ENCODE measurements at regions of chr3 and their contacts with region 1.

Region 1: DNA sequence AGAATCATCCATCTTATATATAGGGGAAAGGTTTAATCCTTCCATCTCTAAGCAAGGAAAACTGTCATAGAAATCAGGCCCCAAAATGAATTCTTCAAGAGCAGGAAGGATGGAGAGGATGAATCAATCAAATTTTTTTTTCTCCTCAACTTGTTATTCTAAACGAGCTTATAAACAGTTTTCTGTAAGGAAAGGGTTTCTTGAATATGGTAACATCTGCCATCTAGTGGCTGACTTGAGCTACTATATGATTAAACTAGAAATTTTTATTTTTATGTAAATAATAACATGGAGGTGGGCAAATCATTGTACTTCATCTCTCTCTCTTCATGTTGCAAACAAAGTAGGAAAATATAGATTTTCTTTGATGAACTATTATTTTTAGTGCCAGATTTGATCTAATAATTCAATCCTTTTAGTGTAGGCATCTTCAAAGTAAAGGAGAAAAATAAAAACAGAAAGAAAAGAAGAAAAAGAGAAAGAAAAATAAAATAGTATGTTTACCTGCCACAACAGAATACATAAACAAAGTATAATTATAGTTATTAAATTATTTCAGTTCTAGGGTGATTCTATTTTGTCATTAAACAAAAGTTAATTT is 146.6 kb downstream of the SERPINI1 start:
- DNase-seq: no peak
- H3K4me3 ChIP-seq: no peak overlapping the region
- H3K27ac ChIP-seq: no peak overlapping the region
- H3K4me1 ChIP-seq: no peaks in the 10 kb centered on the region
- H3K27me3 ChIP-seq: no peaks in the 10 kb centered on the region
- CTCF ChIP-seq: peak; percentile 62

Region 2: GRCh38 chr3:167380004-167380689 is 502.0 kb before region 1 on chr3 and contains the start of gene ZBBX:
- intact Hi-C with region 1: loop called (anchors 5 kb)
- DNase-seq: peak; percentile 89
- H3K4me3 ChIP-seq: peak within 1 kb of the TSS; percentile 22
- H3K27ac ChIP-seq: no peak within 1 kb of the TSS
- H3K4me1 ChIP-seq: no peaks in the 10 kb centered on the region
- H3K27me3 ChIP-seq: no peaks in the 10 kb centered on the region
- CTCF ChIP-seq: peak; percentile 85
- total RNA-seq, gene ZBBX: not detected